Activated naive CD4-positive, alpha-beta T cell treated with anti-CD3 and anti-CD28 coated beads for 36 hours (primary cell): ENCODE measurements at regions of chr2 and their contacts with region 1.

Region 1: DNA sequence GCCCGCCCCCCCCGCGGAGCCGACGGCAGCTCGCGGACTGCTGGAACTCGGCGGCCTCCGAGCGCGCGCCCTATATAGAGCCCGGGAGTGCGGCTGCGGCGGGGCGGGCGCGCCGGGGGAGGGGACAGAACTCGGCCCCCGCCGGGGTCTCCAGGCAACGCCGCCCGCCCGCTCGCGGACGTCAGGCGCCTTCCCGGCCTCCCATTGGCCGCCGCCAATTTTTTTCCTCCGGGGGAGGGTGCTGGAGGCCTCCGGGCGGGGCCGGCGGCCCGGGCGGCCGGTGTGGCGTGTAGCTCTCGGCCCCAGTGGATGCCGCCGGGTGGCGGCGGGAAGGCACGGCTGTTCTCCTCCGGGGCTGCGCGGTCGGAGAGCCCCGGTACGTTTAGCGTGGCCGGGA is at the start of gene ZFP36L2:
- DNase-seq: peak; percentile 95
- H3K4me3 Mint-ChIP-seq: peak within 1 kb of the TSS; percentile 97
- H3K27ac Mint-ChIP-seq: peak within 1 kb of the TSS; percentile 92
- H3K4me1 Mint-ChIP-seq: peaks cover 36% of the 10 kb centered on the region
- H3K27me3 Mint-ChIP-seq: no peaks in the 10 kb centered on the region
- total RNA-seq, gene ZFP36L2: 37.3 to 38.4 TPM

Region 2: DNA sequence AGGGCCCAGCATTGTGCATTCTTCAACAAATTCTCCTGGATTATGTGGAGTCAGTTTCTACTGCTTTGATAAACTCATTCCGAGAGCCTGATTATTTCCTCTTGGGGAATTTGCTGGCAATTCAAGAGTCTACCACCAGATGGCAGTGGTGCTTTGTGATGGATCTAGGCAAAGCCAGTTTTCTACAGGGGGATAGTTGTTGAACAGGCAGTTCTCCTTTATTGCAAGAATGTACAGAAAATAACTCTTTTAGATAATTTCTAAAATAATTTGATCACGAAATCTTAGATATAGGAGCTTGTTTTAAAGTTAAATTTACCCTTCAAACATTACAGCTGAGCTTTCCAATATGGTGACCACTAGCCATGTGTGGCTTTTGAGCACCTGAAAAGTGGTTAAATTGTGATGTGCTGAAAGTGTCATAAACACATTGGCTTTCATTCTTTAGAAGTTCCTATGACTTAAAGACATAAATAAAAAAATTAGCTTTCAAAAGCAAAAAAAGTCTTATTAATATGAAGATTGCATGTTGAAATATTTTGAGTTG is 367.5 kb before region 1 on chr2:
- CTCF ChIA-PET with region 1: interaction called, 15 read pairs
- intact Hi-C with region 1: loop called (anchors 1 kb)
- DNase-seq: peak; percentile 91
- H3K4me3 Mint-ChIP-seq: no peak overlapping the region
- H3K27ac Mint-ChIP-seq: no peak overlapping the region
- H3K4me1 Mint-ChIP-seq: peaks cover 12% of the 10 kb centered on the region
- H3K27me3 Mint-ChIP-seq: no peaks in the 10 kb centered on the region

Region 3: DNA sequence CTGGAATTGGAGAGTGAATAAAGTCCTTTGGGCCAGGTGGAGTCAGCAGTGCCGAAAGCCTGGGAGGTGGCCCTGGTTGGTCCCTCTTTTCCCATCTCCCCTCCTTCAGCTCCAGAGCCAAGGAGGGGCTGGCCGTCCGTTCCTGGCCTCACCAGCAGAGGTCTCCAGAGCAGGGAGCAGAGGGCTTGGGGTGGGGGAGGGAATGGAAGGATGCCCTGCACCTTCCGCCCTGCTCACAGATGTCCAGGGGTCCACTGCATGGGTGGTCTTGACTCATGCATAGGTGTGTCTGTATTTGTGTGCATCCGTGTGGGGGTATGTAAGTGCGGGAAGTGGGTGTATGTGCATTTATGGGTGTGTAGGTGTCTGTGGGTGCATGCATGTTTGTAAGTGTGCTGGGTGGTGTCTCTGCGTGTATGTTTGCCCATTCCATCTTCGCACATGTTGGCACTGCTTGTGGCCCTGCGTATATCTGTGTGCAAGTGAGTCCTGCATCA is 202.0 kb before region 1 on chr2:
- CTCF ChIA-PET with region 1: interaction called, 21 read pairs
- intact Hi-C with region 1: loop called (anchors 1 kb)
- DNase-seq: peak; percentile 58
- H3K4me3 Mint-ChIP-seq: no peak overlapping the region
- H3K27ac Mint-ChIP-seq: no peak overlapping the region
- H3K4me1 Mint-ChIP-seq: peaks cover 8% of the 10 kb centered on the region
- H3K27me3 Mint-ChIP-seq: no peaks in the 10 kb centered on the region

Region 4: GRCh38 chr2:43139996-43140621 is 86.4 kb before region 1 on chr2:
- CTCF ChIA-PET with region 1: interaction called, 505 read pairs
- intact Hi-C with region 1: no loop called
- DNase-seq: no peak
- H3K4me3 Mint-ChIP-seq: no peak overlapping the region
- H3K27ac Mint-ChIP-seq: peak overlapping the region; percentile 14
- H3K4me1 Mint-ChIP-seq: peaks cover 78% of the 10 kb centered on the region
- H3K27me3 Mint-ChIP-seq: no peaks in the 10 kb centered on the region

Region 5: GRCh38 chr2:43178602-43179542 is 47.7 kb before region 1 on chr2:
- CTCF ChIA-PET with region 1: interaction called, 128 read pairs
- intact Hi-C with region 1: loop called (anchors 1 kb)
- DNase-seq: peak; percentile 65
- H3K4me3 Mint-ChIP-seq: peak overlapping the region; percentile 33
- H3K27ac Mint-ChIP-seq: peak overlapping the region; percentile 86
- H3K4me1 Mint-ChIP-seq: peaks cover 77% of the 10 kb centered on the region
- H3K27me3 Mint-ChIP-seq: no peaks in the 10 kb centered on the region

Region 6: DNA sequence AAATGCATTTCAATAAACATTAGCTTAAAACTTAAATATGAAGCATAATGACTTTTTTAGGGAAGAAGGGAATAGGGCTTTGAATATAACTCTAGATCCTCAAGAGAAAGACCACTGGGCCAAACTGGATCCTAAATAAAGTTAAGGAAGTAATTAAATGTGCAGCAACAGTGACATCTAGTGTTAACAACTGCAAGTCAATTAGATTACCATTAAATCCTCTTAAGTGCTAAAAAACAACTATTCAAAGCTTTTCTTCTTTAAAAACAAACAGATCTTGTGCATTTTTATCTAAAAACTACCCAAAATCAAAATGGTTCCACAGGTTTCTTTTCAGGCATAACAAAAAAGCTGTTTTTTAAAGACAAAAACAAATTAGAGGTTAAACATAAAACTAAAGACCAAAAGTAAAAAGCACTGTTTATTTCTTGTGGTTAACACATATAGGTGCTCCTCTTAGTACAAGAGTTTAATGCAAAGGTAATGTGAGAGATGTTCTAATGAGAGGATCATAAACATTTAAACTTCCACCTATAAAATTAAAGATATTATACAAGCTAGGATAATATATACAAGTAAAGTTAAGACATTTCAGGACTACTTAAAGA is 257.9 kb after region 1 on chr2:
- CTCF ChIA-PET with region 1: interaction called, 49 read pairs
- intact Hi-C with region 1: loop called (anchors 1 kb)
- DNase-seq: no peak
- H3K4me3 Mint-ChIP-seq: no peak overlapping the region
- H3K27ac Mint-ChIP-seq: no peak overlapping the region
- H3K4me1 Mint-ChIP-seq: no peaks in the 10 kb centered on the region
- H3K27me3 Mint-ChIP-seq: no peaks in the 10 kb centered on the region